HEK293T (cell line): ENCODE measurements at regions of chr15 and their contacts with region 1.

Region 1: DNA sequence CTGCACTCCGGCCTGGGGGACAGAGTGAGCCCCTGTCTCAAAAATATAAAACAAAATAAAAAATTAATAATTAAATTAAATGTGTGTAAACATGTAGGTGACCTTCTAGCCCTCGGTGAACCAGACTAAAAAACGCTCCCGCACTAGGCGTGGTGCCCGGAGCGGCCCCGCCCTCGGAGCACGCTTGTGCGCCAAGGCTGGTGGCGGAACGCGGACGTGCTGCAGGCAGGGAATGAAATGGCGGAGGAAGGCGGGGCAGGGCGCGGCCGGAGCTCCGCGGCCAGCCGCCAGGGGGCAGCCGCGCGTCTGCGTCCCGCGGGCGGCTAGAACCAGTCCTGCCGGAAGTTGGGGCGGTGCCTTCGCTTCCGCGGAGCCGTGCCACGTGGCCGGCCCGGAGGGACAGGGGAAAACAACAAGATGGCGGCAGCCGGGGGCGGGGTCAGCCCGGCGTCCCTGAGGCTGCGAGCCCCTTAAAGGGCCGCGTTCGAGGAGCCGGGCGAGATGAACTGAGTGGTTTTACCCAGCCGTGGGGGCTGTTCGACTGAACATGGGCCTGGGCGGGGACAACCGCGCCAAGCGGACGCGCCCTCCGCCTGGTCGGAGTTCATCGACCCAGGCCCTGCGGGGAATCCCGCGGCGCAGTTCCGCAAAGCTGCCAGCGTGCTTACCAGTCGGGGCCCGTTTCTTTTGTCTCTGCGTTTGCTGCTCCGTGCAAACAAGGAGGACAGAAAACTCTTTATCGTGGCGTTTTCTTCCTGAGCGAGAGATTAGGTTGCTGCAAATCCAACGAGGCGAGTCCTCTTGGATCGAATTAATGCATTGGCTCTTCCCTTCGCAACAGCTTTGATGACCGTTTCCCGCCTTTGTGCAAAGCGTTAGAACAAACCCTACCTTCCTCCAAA is 90.9 kb upstream of the CHD2 start:
- DNase-seq: peak; percentile 96

Region 2: DNA sequence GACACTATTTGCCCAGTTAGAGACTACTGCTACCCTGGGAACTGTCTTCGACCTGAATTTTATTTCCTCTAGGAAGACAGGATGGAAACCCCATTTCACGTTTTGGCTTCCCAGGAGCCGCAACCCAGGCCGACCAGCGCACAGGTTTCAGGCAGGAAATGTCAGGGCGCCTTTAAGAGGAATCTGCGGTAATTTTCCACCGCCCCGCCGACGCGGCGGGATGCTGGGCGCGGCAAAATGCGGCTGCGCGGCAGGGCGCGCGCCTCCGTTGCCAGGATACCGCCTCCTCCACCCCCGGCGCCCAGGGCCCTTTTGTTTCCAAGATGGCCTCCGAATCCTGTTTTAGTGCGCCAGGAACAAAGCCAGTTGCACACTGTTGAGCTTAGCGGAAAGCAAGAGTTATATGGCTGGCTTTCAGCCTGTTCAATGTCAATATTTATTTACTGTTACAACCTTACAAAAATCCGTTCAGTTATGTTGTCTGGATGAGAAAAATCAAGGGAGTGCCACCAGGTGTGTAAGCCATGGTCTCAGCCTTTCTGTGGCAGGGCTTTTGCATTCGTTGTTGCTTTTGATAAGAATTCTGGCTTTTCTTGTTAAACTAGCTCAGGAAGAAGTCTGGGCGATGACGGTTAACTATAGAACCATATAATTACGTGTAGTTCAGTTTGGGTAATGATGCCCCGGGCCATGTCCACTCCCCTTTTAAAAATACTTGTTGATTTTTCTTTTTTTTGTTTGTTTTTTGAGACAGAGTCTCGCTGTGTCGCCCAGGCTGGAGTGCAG is 11.2 kb after region 1 on chr15:
- CTCF ChIA-PET with region 1: interaction called, 5 read pairs
- POLR2A ChIA-PET with region 1: interaction called, 139 read pairs
- DNase-seq: peak; percentile 95

Region 3: DNA sequence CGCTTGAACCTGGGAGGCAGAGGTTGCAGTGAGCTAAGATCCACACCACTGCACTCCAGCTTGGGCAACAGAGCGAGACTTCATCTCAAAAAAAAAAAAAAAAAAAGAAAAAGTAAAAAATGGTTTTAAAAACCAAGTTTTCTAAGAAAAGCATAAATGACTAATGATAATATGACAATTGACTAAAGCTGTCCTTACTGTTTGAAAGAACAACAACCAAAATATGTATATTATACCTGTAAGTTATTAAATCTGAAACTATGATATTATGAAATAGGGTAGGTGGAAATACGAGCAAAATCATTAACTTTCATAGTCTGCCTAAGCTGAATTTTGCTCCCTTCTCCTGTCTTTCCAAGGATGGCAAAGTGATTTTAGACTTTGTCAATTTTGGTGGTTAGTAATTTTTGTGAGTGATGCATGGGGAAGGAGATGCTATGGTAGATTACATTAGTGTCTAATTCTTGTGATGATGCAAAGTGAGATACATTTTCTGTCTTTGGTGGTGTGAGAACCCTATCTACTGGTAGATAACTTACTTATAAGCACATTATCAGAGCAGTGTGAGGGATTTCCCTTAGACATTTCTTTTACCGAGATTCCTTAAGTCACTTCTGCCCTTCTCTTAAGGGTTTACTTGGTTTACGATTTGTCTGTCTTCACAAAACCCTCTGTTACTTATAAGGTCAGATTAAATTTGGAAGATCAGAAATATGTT is 80.3 kb after region 1 on chr15:
- CTCF ChIA-PET with region 1: interaction called, 4 read pairs
- POLR2A ChIA-PET with region 1: interaction called, 191 read pairs
- DNase-seq: no peak

Region 4: DNA sequence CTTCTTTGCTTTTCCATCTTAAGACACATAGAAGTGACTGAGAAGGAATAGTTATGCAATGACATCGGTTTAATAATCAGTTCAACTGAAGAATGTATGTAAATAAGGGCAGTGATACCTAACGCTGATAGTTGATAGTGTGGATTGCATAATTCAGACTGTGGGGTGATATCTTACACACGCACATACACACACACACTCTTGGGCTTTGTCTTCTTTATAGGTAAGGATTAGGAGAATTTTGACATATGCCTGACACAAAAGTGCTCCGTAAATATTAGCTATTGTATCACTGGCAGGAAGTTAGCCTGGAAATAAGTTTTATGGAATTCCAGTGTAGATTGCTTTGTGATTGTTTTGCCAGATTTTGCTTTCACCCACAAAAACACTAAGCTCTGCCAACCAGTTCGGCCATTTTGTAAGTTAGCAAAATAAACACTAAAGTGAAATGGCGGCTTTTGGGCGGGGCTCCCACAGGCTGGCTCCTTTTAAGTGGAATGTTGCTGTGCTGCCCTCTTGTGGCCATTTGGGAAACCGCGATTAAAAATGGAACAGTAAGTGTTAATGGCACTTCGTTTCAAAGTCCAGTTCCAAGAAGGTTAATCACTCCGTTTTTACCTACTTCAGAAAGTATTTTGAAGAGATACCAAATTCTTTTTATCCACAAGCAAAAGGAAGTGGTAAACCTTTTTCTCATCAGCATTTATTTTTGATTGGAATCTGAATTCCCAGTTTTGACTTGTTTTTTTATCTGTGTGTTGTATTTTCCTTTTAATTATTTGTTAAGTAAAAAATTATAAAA is 108.6 kb after region 1 on chr15:
- CTCF ChIA-PET with region 1: interaction called, 7 read pairs
- POLR2A ChIA-PET with region 1: interaction called, 42 read pairs
- DNase-seq: peak; percentile 77